GM12878 (cell line): ENCODE measurements at regions of chr21 and their contacts with region 1.

Region 1: DNA sequence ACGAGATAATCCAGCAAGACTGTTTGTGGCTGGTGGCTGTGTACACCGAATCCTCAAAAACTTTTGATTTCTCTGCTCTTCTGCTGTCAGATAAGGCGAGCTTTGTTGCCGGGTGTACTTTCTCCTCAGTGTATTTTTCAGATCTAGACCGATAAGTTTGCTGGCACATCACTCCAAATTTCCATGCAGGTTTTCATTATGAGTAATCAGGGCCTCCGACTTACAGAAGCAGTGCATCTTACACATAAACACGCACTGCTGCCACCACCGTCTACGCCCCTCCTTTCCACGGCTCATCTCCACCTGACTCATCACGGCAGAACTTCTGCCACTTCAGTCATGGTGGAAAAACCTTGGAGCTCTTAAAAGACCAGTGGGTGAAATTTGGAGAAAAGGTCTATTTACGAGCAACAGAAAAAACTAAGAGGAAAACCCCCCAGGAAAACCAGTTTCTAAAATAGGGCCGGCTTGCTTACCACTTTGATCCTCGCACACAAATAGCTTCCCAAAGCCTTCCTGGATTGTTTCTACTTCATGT is 7.7 kb downstream of the ZBTB21 start:
- DNase-seq: peak; percentile 86
- ATAC-seq: peak; percentile 92
- H3K4me3 ChIP-seq: peak overlapping the region; percentile 50
- H3K27ac ChIP-seq: peak overlapping the region; percentile 79
- H3K4me1 ChIP-seq: peaks cover 19% of the 10 kb centered on the region
- H3K27me3 ChIP-seq: no peaks in the 10 kb centered on the region
- CTCF ChIP-seq: no peak
- EP300 ChIP-seq: peak; percentile 80 to 85; a peak in 3 of 4 replicates
- POLR2A ChIP-seq: 0 out of 2 replicates have a peak, but pooled peaks have one; percentile 18
- RAD21 ChIP-seq: no peak

Region 2: DNA sequence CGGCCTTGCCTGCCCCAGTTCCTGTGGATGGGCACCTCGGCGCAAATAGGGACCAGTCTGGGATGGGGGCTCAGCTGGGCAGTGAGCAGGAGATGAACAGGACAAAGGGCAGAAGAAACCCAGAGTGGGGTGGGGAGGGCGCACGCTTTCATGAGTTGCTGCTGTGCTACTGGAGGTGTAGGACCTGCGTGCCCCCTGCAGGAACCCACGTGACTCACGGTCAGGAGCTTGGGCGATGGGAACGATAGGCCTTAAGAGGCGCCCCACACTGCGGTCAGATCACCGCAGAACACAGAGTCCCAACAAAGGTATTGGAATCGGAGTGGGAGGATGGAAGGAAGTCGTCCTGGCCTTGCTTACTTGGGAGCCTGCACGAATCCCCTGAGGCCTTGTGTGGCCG is 140.5 kb before region 1 on chr21:
- CTCF ChIA-PET with region 1: no interaction called
- POLR2A ChIA-PET with region 1: interaction called, 5 read pairs
- RAD21 ChIA-PET with region 1: no interaction called
- SMC1A ChIA-PET with region 1: interaction called, 5 read pairs
- in situ Hi-C with region 1: no loop called
- intact Hi-C with region 1: loop called (anchors 5 kb)
- DNase-seq: no peak
- ATAC-seq: peak; percentile 49
- H3K4me3 ChIP-seq: peak overlapping the region; percentile 58
- H3K27ac ChIP-seq: peak overlapping the region; percentile 91
- H3K4me1 ChIP-seq: peaks cover 51% of the 10 kb centered on the region
- H3K27me3 ChIP-seq: no peaks in the 10 kb centered on the region
- CTCF ChIP-seq: peak; percentile 43 to 60 (median 49); a peak in 5 of 6 replicates
- EP300 ChIP-seq: no peak
- POLR2A ChIP-seq: no peak
- RAD21 ChIP-seq: peak; percentile 47; the same call in 1 of the 2 replicates

Region 3: DNA sequence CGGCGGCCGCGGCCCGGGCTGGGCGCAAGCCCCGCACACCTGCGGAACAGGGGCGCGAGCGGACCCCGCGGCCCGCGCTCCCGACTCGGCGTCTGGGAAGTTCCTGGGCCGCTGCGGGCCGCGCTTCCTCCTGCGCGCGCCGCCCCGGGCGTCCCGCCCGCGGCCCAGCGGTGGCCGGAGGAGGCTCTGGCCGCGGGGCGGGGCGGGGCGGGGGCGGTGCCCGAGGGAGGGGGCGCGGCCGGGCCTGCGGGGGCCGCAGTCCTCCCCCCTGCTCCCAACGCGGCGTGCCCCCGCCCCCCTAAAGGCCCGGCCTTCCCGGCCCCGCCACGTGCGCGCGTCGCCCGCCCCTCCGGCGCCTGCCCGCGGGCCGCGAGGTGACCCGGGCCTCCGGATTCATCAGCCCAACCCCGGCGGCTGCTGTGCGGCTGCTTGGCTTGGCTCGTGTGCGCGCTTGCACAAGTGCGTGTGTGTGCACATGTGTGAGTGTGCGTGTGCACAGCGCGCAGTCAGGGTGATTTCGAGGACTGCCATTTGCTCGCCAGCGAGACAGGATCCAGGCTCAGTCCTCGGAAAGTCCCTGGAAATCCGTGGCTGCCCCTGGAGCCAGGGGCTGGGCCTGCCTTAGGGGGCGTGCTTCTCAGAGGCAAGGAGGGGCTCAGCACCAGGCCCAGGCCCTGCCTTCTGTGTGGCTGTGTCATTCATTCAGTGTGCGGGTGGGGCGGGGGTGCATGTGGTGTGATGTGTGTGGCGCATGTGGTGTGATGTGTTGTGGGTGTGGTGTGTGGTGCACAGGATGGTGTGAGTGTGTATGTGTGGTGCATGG is 48.4 kb before region 1 on chr21 and contains the start of gene C2CD2:
- CTCF ChIA-PET with region 1: interaction called, 3 read pairs
- POLR2A ChIA-PET with region 1: interaction called, 4 read pairs
- RAD21 ChIA-PET with region 1: interaction called, 6 read pairs
- SMC1A ChIA-PET with region 1: interaction called, 3 read pairs
- in situ Hi-C with region 1: no loop called
- intact Hi-C with region 1: loop called (anchors 5 kb)
- DNase-seq: no peak
- ATAC-seq: peak; percentile 65
- H3K4me3 ChIP-seq: peak within 1 kb of the TSS; percentile 78
- H3K27ac ChIP-seq: peak within 1 kb of the TSS; percentile 48
- H3K4me1 ChIP-seq: peaks cover 37% of the 10 kb centered on the region
- H3K27me3 ChIP-seq: no peaks in the 10 kb centered on the region
- CTCF ChIP-seq: no peak
- EP300 ChIP-seq: no peak; a peak in 1 of 4 replicates
- POLR2A ChIP-seq: peak; percentile 56
- RAD21 ChIP-seq: no peak
- polyA plus RNA-seq, gene C2CD2: 2.2 to 2.9 TPM

Region 4: DNA sequence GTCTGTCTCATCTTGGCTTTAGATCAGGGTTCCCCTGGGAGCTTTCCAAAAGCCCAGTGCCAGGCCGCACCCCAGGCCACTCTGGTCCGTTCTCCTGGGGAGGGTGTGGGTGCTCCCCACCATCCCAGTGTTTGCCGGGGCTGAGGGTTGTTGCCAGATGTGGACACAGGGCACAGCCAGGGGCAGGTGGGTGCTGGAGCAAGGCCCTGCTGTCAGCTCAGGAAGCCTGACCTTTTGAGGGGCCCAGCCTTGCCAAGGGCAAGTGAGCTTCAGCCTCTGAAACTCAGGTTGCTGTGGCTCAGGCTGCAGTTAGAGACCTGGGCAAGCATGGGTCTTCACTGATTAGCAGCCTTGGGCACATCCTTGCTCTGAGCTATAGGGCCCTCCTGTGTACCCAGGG is 30.5 kb after region 1 on chr21:
- CTCF ChIA-PET with region 1: no interaction called
- POLR2A ChIA-PET with region 1: no interaction called
- RAD21 ChIA-PET with region 1: no interaction called
- SMC1A ChIA-PET with region 1: no interaction called
- in situ Hi-C with region 1: no loop called
- intact Hi-C with region 1: no loop called
- DNase-seq: no peak
- ATAC-seq: peak; percentile 40
- H3K4me3 ChIP-seq: no peak overlapping the region
- H3K27ac ChIP-seq: no peak overlapping the region
- H3K4me1 ChIP-seq: peaks cover 13% of the 10 kb centered on the region
- H3K27me3 ChIP-seq: no peaks in the 10 kb centered on the region
- CTCF ChIP-seq: no peak
- EP300 ChIP-seq: no peak
- POLR2A ChIP-seq: no peak
- RAD21 ChIP-seq: no peak